PC-9 (cell line): ENCODE measurements at regions of chr13 and their contacts with region 1.

Region 1: DNA sequence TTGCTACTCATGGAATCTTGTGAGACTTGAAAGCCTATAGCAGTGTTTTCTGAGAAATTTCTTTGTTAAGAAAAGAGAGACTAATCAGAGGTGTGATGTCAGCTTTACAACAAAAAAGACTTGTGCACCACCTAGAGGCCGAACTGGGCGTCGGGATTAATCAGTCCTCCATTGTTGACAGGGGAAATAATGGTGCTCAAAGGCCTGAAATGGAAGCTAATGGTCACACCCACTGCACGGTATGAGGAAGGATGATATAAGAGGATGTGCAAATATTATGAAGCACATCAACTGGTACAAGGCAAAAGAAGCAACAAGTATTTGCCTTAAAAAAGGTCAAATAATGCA is 480.2 kb upstream of the MIR17HG start:
- DNase-seq: peak; percentile 64 to 73
- H3K4me3 ChIP-seq: no peak overlapping the region
- H3K27ac ChIP-seq: no peak overlapping the region
- H3K4me1 ChIP-seq: peaks cover 4% of the 10 kb centered on the region; the same call in 1 of the 2 replicates
- H3K27me3 ChIP-seq: no peaks in the 10 kb centered on the region
- CTCF ChIP-seq: peak; percentile 81

Region 2: GRCh38 chr13:89432997-89433396 is 1434.3 kb before region 1 on chr13:
- CTCF ChIA-PET with region 1: no interaction called
- POLR2A ChIA-PET with region 1: no interaction called
- intact Hi-C with region 1: loop called (anchors 10 kb)
- DNase-seq: no peak
- H3K4me3 ChIP-seq: no peak overlapping the region
- H3K27ac ChIP-seq: no peak overlapping the region
- H3K4me1 ChIP-seq: no peaks in the 10 kb centered on the region
- H3K27me3 ChIP-seq: no peaks in the 10 kb centered on the region
- CTCF ChIP-seq: no peak

Region 3: GRCh38 chr13:89695343-89696257 is 1171.7 kb before region 1 on chr13:
- CTCF ChIA-PET with region 1: no interaction called
- POLR2A ChIA-PET with region 1: no interaction called
- intact Hi-C with region 1: loop called (anchors 2 kb)
- DNase-seq: peak in 1 of 2 experiments; percentile 9
- H3K4me3 ChIP-seq: no peak overlapping the region
- H3K27ac ChIP-seq: no peak overlapping the region
- H3K4me1 ChIP-seq: no peaks in the 10 kb centered on the region
- H3K27me3 ChIP-seq: no peaks in the 10 kb centered on the region
- CTCF ChIP-seq: peak; percentile 79

Region 4: GRCh38 chr13:89925107-89925506 is 942.2 kb before region 1 on chr13:
- CTCF ChIA-PET with region 1: no interaction called
- POLR2A ChIA-PET with region 1: no interaction called
- intact Hi-C with region 1: loop called (anchors 10 kb)
- DNase-seq: no peak
- H3K4me3 ChIP-seq: no peak overlapping the region
- H3K27ac ChIP-seq: no peak overlapping the region
- H3K4me1 ChIP-seq: no peaks in the 10 kb centered on the region
- H3K27me3 ChIP-seq: no peaks in the 10 kb centered on the region
- CTCF ChIP-seq: peak; percentile 59

Region 5: GRCh38 chr13:90365130-90365529 is 502.2 kb before region 1 on chr13:
- CTCF ChIA-PET with region 1: no interaction called
- POLR2A ChIA-PET with region 1: no interaction called
- intact Hi-C with region 1: loop called (anchors 10 kb)
- DNase-seq: no peak
- H3K4me3 ChIP-seq: no peak overlapping the region
- H3K27ac ChIP-seq: no peak overlapping the region
- H3K4me1 ChIP-seq: no peaks in the 10 kb centered on the region
- H3K27me3 ChIP-seq: no peaks in the 10 kb centered on the region
- CTCF ChIP-seq: 0 out of 2 replicates have a peak, but pooled peaks have one; percentile 17

Region 6: GRCh38 chr13:90445179-90445578 is 422.1 kb before region 1 on chr13:
- CTCF ChIA-PET with region 1: no interaction called
- POLR2A ChIA-PET with region 1: no interaction called
- intact Hi-C with region 1: loop called (anchors 5 kb)
- DNase-seq: peak; percentile 67 to 74
- H3K4me3 ChIP-seq: no peak overlapping the region
- H3K27ac ChIP-seq: peak overlapping the region; percentile 24
- H3K4me1 ChIP-seq: peaks cover 32% of the 10 kb centered on the region
- H3K27me3 ChIP-seq: no peaks in the 10 kb centered on the region
- CTCF ChIP-seq: no peak

Region 7: GRCh38 chr13:90502153-90502552 is 365.2 kb before region 1 on chr13:
- CTCF ChIA-PET with region 1: no interaction called
- POLR2A ChIA-PET with region 1: no interaction called
- intact Hi-C with region 1: loop called (anchors 5 kb)
- DNase-seq: no peak
- H3K4me3 ChIP-seq: no peak overlapping the region
- H3K27ac ChIP-seq: no peak overlapping the region
- H3K4me1 ChIP-seq: no peaks in the 10 kb centered on the region
- H3K27me3 ChIP-seq: no peaks in the 10 kb centered on the region
- CTCF ChIP-seq: no peak